H1 (cell line): ENCODE measurements at regions of chr9 and their contacts with region 1.

Region 1: GRCh38 chr9:20526500-20527319 is 95.6 kb downstream of the MLLT3 start:
- DNase-seq: no peak
- H3K4me3 ChIP-seq: no peak overlapping the region
- H3K27ac ChIP-seq: no peak overlapping the region
- H3K4me1 ChIP-seq: no peaks in the 10 kb centered on the region
- H3K27me3 ChIP-seq: no peaks in the 10 kb centered on the region
- CTCF ChIP-seq: no peak
- EP300 ChIP-seq: no peak
- POLR2A ChIP-seq: no peak
- RAD21 ChIP-seq: no peak

Region 2: GRCh38 chr9:20197976-20198685 is 328.6 kb before region 1 on chr9:
- CTCF ChIA-PET with region 1: no interaction called
- POLR2A ChIA-PET with region 1: no interaction called
- DNase-seq: no peak
- H3K4me3 ChIP-seq: no peak overlapping the region
- H3K27ac ChIP-seq: no peak overlapping the region
- H3K4me1 ChIP-seq: peaks cover 0 to 10% (median 7%) of the 10 kb centered on the region in 4 experiments; a peak in 4 of 7 replicates
- H3K27me3 ChIP-seq: no peaks in the 10 kb centered on the region
- CTCF ChIP-seq: no peak
- EP300 ChIP-seq: no peak
- POLR2A ChIP-seq: no peak
- RAD21 ChIP-seq: no peak

Region 3: GRCh38 chr9:20512106-20512505 is 14.6 kb before region 1 on chr9:
- CTCF ChIA-PET with region 1: interaction called, 19 read pairs
- POLR2A ChIA-PET with region 1: no interaction called
- DNase-seq: no peak
- H3K4me3 ChIP-seq: no peak overlapping the region
- H3K27ac ChIP-seq: no peak overlapping the region
- H3K4me1 ChIP-seq: no peaks in the 10 kb centered on the region
- H3K27me3 ChIP-seq: no peaks in the 10 kb centered on the region
- CTCF ChIP-seq: no peak
- EP300 ChIP-seq: no peak
- POLR2A ChIP-seq: no peak
- RAD21 ChIP-seq: no peak

Region 4: GRCh38 chr9:20538092-20538491 is 11.4 kb after region 1 on chr9:
- CTCF ChIA-PET with region 1: interaction called, 24 read pairs
- POLR2A ChIA-PET with region 1: no interaction called
- DNase-seq: no peak
- H3K4me3 ChIP-seq: no peak overlapping the region
- H3K27ac ChIP-seq: no peak overlapping the region
- H3K4me1 ChIP-seq: no peaks in the 10 kb centered on the region
- H3K27me3 ChIP-seq: no peaks in the 10 kb centered on the region
- CTCF ChIP-seq: no peak
- EP300 ChIP-seq: no peak
- POLR2A ChIP-seq: no peak
- RAD21 ChIP-seq: no peak

Region 5: DNA sequence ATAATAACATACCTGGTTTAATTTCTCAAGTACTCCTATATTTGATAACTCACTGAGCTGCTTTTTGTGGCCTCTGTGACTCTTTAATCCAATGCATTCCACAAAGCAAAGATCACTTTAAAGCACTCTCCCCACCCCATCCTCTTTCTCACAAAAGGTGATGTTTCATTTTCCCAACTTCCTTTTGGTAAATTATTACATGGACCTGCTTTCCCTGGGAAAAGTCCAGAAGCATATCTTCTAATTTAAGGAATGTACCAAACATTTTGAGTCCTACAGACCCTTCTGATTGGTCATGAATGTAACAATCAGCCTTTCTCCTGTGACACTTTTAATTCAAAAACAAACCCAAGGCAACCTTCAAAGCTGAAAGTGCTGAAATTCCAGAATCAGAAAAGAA is 24.5 kb after region 1 on chr9:
- CTCF ChIA-PET with region 1: interaction called, 10 read pairs
- POLR2A ChIA-PET with region 1: no interaction called
- DNase-seq: no peak
- H3K4me3 ChIP-seq: no peak overlapping the region
- H3K27ac ChIP-seq: no peak overlapping the region
- H3K4me1 ChIP-seq: peaks cover 0 to 3% (median 0%) of the 10 kb centered on the region in 4 experiments; a peak in 4 of 7 replicates
- H3K27me3 ChIP-seq: no peaks in the 10 kb centered on the region
- CTCF ChIP-seq: no peak
- EP300 ChIP-seq: no peak
- POLR2A ChIP-seq: no peak
- RAD21 ChIP-seq: no peak